IMR-90 (cell line): ENCODE measurements at regions of chr1 and their contacts with region 1.

Region 1: GRCh38 chr1:197606168-197606845 is 169.0 kb downstream of the DENND1B start:
- DNase-seq: no peak
- ATAC-seq: no peak
- H3K4me3 ChIP-seq: no peak overlapping the region
- H3K27ac ChIP-seq: no peak overlapping the region
- H3K4me1 ChIP-seq: no peaks in the 10 kb centered on the region
- H3K27me3 ChIP-seq: no peaks in the 10 kb centered on the region
- CTCF ChIP-seq: no peak
- POLR2A ChIP-seq: no peak
- RAD21 ChIP-seq: no peak

Region 2: GRCh38 chr1:198304431-198304830 is 698.1 kb after region 1 on chr1:
- CTCF ChIA-PET with region 1: no interaction called
- POLR2A ChIA-PET with region 1: no interaction called
- dilution Hi-C with region 1: no loop called
- in situ Hi-C with region 1: no loop called
- intact Hi-C with region 1: loop called (anchors 10 kb)
- DNase-seq: no peak
- ATAC-seq: no peak
- H3K4me3 ChIP-seq: no peak overlapping the region
- H3K27ac ChIP-seq: no peak overlapping the region
- H3K4me1 ChIP-seq: no peaks in the 10 kb centered on the region
- H3K27me3 ChIP-seq: no peaks in the 10 kb centered on the region
- CTCF ChIP-seq: no peak
- POLR2A ChIP-seq: no peak
- RAD21 ChIP-seq: no peak